ENCODE measurements at regions of chr22 and their contacts with region 1.

Region 1: DNA sequence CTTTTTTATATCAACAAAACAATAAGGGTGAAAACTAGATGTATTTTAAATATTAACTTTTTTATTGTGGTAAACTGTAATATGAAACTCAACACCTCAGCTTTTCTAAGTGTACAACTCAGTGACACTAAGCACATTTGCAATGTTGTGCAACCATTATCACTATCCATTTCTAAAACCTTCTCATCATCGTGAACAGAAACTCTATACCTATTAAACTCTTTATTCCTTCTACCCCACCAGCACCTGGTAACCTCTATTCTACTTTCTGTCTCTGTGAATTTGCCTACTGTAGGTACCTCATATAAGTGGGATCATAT is 9.4 kb downstream of the HORMAD2 start:
- DNase-seq: no peak
- H3K4me3 ChIP-seq: no peak overlapping the region
- H3K27ac ChIP-seq: no peak overlapping the region
- H3K4me1 ChIP-seq: no peaks in the 10 kb centered on the region
- H3K27me3 ChIP-seq: no peaks in the 10 kb centered on the region
- CTCF ChIP-seq: no peak

Region 2: DNA sequence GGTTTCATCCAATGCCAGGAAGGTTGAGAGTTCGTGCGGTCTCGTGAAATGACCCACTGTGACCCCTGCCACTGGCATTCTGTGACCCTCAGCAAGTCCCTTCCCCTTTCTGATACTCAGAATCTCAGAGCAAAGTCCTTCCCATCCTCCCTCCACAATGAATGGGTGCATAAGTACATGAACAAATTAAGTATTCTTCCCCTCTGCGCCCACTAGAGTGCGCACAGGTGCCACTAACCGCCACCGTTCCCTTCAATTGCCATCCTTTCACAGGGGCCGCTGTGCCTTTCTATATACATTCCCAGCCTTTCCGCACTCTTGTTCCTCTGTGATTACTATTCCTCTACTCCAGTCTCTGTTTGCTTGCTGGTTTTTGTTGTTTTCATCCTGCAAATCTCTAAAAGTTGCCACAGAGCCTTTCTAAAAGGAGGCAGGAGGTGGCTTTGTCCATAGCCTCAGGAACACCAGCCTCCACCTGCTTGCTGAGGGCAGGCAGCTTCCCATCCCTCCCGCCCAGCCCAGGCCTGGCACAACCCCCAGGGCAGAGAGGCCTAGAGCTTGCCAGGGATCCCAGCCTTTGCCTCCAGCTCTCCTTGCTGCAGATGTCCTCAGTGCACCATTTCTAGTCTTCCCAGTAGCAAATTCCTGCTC is 694.6 kb before region 1 on chr22:
- CTCF ChIA-PET with region 1: interaction called, 8 read pairs
- dilution Hi-C with region 1: no loop called
- in situ Hi-C with region 1: loop called in 1 of 2 experiments (anchors 25 kb)
- intact Hi-C with region 1: loop called (anchors 1 kb)
- DNase-seq: peak; percentile 57
- H3K4me3 ChIP-seq: no peak overlapping the region
- H3K27ac ChIP-seq: no peak overlapping the region
- H3K4me1 ChIP-seq: no peaks in the 10 kb centered on the region
- H3K27me3 ChIP-seq: no peaks in the 10 kb centered on the region
- CTCF ChIP-seq: peak; percentile 84 to 89

Region 3: GRCh38 chr22:29587938-29588699 is 501.5 kb before region 1 on chr22:
- CTCF ChIA-PET with region 1: interaction called, 12 read pairs
- dilution Hi-C with region 1: no loop called
- in situ Hi-C with region 1: no loop called
- intact Hi-C with region 1: loop called (anchors 1 kb)
- DNase-seq: peak; percentile 90
- H3K4me3 ChIP-seq: no peak overlapping the region
- H3K27ac ChIP-seq: peak overlapping the region; percentile 16
- H3K4me1 ChIP-seq: peaks cover 15% of the 10 kb centered on the region
- H3K27me3 ChIP-seq: no peaks in the 10 kb centered on the region
- CTCF ChIP-seq: no peak

Region 4: DNA sequence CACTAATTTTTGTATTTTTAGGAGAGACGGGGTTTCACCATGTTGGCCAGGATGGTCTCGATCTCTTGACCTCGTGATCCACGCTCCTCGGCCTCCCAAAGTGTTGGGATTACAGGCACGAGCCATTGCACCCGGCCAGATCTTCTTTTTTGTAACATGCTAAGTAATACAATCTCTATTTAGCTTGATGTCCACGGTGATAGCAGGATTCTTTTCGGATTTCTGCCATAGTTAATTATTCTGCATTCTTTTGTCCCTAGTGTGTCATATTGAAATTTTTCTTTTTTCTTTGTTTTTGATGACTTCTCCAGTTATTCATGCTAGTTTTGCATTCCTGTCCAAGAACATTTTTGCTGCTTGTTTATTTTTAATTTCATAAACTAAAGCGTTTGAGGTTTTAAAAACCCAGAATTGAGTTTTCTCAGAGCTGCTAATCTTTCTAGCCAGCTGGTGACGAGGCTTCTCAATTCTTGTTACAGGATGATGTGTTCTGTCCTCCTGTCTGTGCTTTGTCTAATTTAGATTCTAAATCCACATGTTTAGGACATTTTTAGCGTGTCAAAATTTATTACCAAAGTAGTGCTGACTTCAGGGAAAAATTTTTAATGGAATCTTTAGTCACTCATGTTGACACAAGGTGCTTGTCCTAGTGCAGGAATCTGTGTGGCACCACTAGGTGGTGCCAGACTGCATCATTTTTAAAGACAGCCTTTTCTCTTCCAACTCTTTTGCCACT is 464.4 kb before region 1 on chr22:
- CTCF ChIA-PET with region 1: no interaction called
- dilution Hi-C with region 1: no loop called
- in situ Hi-C with region 1: loop called in 1 of 2 experiments (anchors 10 kb)
- intact Hi-C with region 1: loop called (anchors 2 kb)
- DNase-seq: peak; percentile 69
- H3K4me3 ChIP-seq: peak overlapping the region in 1 of 3 experiments; percentile 10
- H3K27ac ChIP-seq: peak overlapping the region; percentile 65
- H3K4me1 ChIP-seq: peaks cover 77% of the 10 kb centered on the region
- H3K27me3 ChIP-seq: no peaks in the 10 kb centered on the region
- CTCF ChIP-seq: peak; percentile 86 to 95

Region 5: GRCh38 chr22:29689880-29690213 is 399.8 kb before region 1 on chr22:
- CTCF ChIA-PET with region 1: interaction called, 5 read pairs
- dilution Hi-C with region 1: no loop called
- in situ Hi-C with region 1: no loop called
- intact Hi-C with region 1: loop called (anchors 1 kb)
- DNase-seq: peak; percentile 23
- H3K4me3 ChIP-seq: no peak overlapping the region
- H3K27ac ChIP-seq: no peak overlapping the region
- H3K4me1 ChIP-seq: peaks cover 10% of the 10 kb centered on the region
- H3K27me3 ChIP-seq: no peaks in the 10 kb centered on the region
- CTCF ChIP-seq: peak; percentile 59 to 81

Region 6: GRCh38 chr22:29820961-29821789 is 268.4 kb before region 1 on chr22:
- CTCF ChIA-PET with region 1: interaction called, 10 read pairs
- dilution Hi-C with region 1: no loop called
- in situ Hi-C with region 1: no loop called
- intact Hi-C with region 1: no loop called
- DNase-seq: peak; percentile 97
- H3K4me3 ChIP-seq: no peak overlapping the region
- H3K27ac ChIP-seq: no peak overlapping the region
- H3K4me1 ChIP-seq: peaks cover 33% of the 10 kb centered on the region
- H3K27me3 ChIP-seq: no peaks in the 10 kb centered on the region
- CTCF ChIP-seq: no peak

Region 7: GRCh38 chr22:30015846-30016245 is 73.8 kb before region 1 on chr22:
- CTCF ChIA-PET with region 1: no interaction called
- dilution Hi-C with region 1: no loop called
- in situ Hi-C with region 1: no loop called
- intact Hi-C with region 1: loop called (anchors 2 kb)
- DNase-seq: peak; percentile 38
- H3K4me3 ChIP-seq: no peak overlapping the region
- H3K27ac ChIP-seq: no peak overlapping the region
- H3K4me1 ChIP-seq: peaks cover 7% of the 10 kb centered on the region
- H3K27me3 ChIP-seq: no peaks in the 10 kb centered on the region
- CTCF ChIP-seq: no peak

Region 8: GRCh38 chr22:30362651-30363281 is 273.2 kb after region 1 on chr22:
- CTCF ChIA-PET with region 1: no interaction called
- dilution Hi-C with region 1: no loop called
- in situ Hi-C with region 1: no loop called
- intact Hi-C with region 1: no loop called
- DNase-seq: no peak
- H3K4me3 ChIP-seq: no peak overlapping the region
- H3K27ac ChIP-seq: no peak overlapping the region
- H3K4me1 ChIP-seq: peaks cover under 1% of the 10 kb centered on the region
- H3K27me3 ChIP-seq: no peaks in the 10 kb centered on the region
- CTCF ChIP-seq: no peak